ENCODE measurements at regions of chr5 and their contacts with region 1.

Region 1: GRCh38 chr5:150175076-150175935 is 8.7 kb downstream of the CDX1 start:
- DNase-seq: peak; percentile 62 to 72
- H3K4me3 ChIP-seq: no peak overlapping the region
- H3K4me3 Mint-ChIP-seq: no peak overlapping the region
- H3K27ac Mint-ChIP-seq: no peak overlapping the region
- H3K4me1 ChIP-seq: peaks cover 5% of the 10 kb centered on the region; the same call in 1 of the 2 replicates
- H3K4me1 Mint-ChIP-seq: peaks cover 19% of the 10 kb centered on the region
- H3K27me3 ChIP-seq: no peaks in the 10 kb centered on the region
- H3K27me3 Mint-ChIP-seq: no peaks in the 10 kb centered on the region
- CTCF ChIP-seq: peak; percentile 63 to 67

Region 2: GRCh38 chr5:150014456-150014855 is 160.8 kb before region 1 on chr5:
- CTCF ChIA-PET with region 1: no interaction called
- POLR2A ChIA-PET with region 1: no interaction called
- intact Hi-C with region 1: no loop called
- DNase-seq: no peak
- H3K4me3 ChIP-seq: no peak overlapping the region
- H3K4me3 Mint-ChIP-seq: no peak overlapping the region
- H3K27ac Mint-ChIP-seq: no peak overlapping the region
- H3K4me1 ChIP-seq: no peaks in the 10 kb centered on the region
- H3K4me1 Mint-ChIP-seq: no peaks in the 10 kb centered on the region
- H3K27me3 ChIP-seq: no peaks in the 10 kb centered on the region
- H3K27me3 Mint-ChIP-seq: no peaks in the 10 kb centered on the region
- CTCF ChIP-seq: no peak

Region 3: DNA sequence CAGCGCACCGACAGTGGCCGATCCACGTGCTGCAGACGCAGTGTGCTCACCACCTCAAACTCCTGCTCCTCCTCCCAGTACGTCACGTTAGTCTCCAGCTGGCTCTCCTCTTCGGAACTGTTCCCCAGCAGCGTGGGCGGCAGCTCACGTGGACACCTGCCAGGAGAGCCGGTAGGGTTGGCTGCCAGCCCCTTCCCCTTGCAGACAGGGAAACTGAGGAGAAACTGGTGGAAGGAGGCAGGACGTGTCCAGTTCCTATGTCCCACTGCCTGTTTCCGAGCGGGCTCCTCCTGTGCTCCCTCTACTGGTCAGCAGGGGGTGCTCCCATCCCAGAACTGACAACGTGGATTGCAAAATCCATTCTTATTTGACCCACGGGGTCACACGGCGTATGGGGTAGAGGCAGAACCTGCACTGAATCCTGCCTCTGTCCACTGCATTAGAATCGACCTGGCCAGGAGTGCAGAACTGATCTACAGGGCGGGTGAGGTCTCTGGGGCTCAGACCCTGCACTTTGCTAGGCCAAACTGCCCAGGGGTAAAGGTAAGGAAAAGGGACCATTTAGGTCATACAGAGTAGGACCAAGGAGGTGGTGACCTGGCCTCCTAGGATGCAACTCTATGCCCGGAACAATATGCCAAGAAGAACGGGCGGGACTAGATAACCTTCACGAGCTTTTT is 45.4 kb before region 1 on chr5:
- CTCF ChIA-PET with region 1: interaction called, 4 read pairs
- POLR2A ChIA-PET with region 1: no interaction called
- intact Hi-C with region 1: loop called (anchors 1 kb)
- DNase-seq: peak; percentile 80 to 86
- H3K4me3 ChIP-seq: no peak overlapping the region
- H3K4me3 Mint-ChIP-seq: no peak overlapping the region
- H3K27ac Mint-ChIP-seq: no peak overlapping the region
- H3K4me1 ChIP-seq: peaks cover 10% of the 10 kb centered on the region
- H3K4me1 Mint-ChIP-seq: peaks cover 9% of the 10 kb centered on the region
- H3K27me3 ChIP-seq: no peaks in the 10 kb centered on the region
- H3K27me3 Mint-ChIP-seq: no peaks in the 10 kb centered on the region
- CTCF ChIP-seq: peak; percentile 95 to 96

Region 4: GRCh38 chr5:150137168-150137957 is 37.9 kb before region 1 on chr5:
- CTCF ChIA-PET with region 1: interaction called, 15 read pairs
- POLR2A ChIA-PET with region 1: no interaction called
- intact Hi-C with region 1: no loop called
- DNase-seq: peak; percentile 94 to 95
- H3K4me3 ChIP-seq: no peak overlapping the region
- H3K4me3 Mint-ChIP-seq: peak overlapping the region; percentile 72
- H3K27ac Mint-ChIP-seq: peak overlapping the region; percentile 92
- H3K4me1 ChIP-seq: peaks cover 65% of the 10 kb centered on the region
- H3K4me1 Mint-ChIP-seq: peaks cover 47% of the 10 kb centered on the region
- H3K27me3 ChIP-seq: no peaks in the 10 kb centered on the region
- H3K27me3 Mint-ChIP-seq: no peaks in the 10 kb centered on the region
- CTCF ChIP-seq: no peak

Region 5: DNA sequence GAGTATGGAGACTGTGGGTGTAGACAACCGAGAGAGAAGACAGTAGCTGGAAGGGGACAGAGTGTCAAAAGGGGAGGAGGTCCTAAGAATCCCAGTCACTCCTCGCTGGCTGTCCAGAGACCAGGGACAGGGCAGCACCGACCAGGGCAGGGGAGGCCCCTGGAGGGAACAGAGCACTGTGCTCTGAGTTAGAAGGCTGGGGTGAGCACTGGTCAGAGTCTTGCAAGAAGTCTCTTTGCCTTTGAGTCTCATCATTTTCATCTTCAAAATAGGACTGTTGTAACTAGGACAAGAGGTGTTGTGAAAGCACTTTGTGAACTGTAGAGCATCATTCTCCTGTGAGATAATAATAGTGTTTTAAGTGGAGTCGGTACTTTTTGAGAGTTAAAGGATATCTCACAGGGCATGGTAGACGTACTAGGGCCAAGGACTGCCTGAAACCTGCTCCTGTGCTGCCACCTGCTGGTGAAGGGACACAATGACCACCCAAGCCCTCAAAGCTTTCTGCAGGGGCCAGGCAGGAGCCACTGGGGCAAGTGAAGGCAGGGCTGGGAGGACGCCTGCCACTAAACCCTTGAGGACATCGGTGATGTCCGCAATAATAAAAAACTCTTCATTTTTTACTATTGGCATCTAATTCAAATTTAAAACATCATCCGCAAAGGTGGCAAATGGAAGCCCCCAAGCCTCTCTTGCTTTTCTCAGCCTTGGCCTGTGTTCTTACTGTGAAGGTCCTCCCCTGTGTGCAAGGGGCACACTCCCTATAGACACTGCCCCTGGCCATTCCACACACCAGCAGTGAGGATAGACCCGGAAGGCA is 42.8 kb after region 1 on chr5:
- CTCF ChIA-PET with region 1: interaction called, 6 read pairs
- POLR2A ChIA-PET with region 1: no interaction called
- intact Hi-C with region 1: loop called (anchors 5 kb)
- DNase-seq: peak; percentile 83 to 89
- H3K4me3 ChIP-seq: no peak overlapping the region
- H3K4me3 Mint-ChIP-seq: no peak overlapping the region
- H3K27ac Mint-ChIP-seq: peak overlapping the region; percentile 54
- H3K4me1 ChIP-seq: peaks cover 19% of the 10 kb centered on the region
- H3K4me1 Mint-ChIP-seq: peaks cover 18% of the 10 kb centered on the region
- H3K27me3 ChIP-seq: no peaks in the 10 kb centered on the region
- H3K27me3 Mint-ChIP-seq: no peaks in the 10 kb centered on the region
- CTCF ChIP-seq: peak; percentile 83 to 93

Measured in Caco-2 (cell line).